ENCODE measurements at regions of chr14 and their contacts with region 1.

Region 1: GRCh38 chr14:34220921-34221320 is 241.1 kb downstream of the SPTSSA start:
- DNase-seq: no peak
- H3K4me3 Mint-ChIP-seq: no peak overlapping the region
- H3K27ac Mint-ChIP-seq: peak overlapping the region; percentile 6
- H3K4me1 Mint-ChIP-seq: peaks cover 46% of the 10 kb centered on the region
- H3K27me3 Mint-ChIP-seq: no peaks in the 10 kb centered on the region
- CTCF ChIP-seq: no peak

Region 2: DNA sequence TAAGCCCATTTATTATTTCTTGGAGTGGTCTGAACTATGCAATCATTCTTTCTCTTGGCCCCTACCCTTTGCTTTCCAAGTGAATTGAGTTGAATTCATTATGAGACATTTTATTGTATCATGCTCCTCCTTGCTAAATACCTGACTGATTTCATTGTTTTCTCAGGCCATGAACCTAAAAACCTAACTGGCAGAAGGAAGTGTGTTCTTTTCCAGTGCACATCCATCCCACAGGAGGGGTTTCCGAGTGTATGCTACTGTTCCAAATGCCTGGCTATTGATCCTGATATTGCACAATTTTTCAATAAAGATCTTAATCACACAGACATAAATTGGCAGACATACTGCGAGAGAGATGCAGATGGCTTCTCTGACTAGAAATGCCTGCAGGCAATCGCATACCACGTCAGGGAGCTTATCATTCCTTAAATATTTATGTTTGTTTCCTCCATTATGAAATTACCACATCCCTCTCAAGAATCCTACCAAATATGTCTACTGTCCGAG is 107.9 kb before region 1 on chr14:
- CTCF ChIA-PET with region 1: no interaction called
- intact Hi-C with region 1: loop called (anchors 2 kb)
- DNase-seq: peak; percentile 37
- H3K4me3 Mint-ChIP-seq: no peak overlapping the region
- H3K27ac Mint-ChIP-seq: peak overlapping the region; percentile 79
- H3K4me1 Mint-ChIP-seq: peaks cover 38% of the 10 kb centered on the region
- H3K27me3 Mint-ChIP-seq: no peaks in the 10 kb centered on the region
- CTCF ChIP-seq: no peak

Region 3: DNA sequence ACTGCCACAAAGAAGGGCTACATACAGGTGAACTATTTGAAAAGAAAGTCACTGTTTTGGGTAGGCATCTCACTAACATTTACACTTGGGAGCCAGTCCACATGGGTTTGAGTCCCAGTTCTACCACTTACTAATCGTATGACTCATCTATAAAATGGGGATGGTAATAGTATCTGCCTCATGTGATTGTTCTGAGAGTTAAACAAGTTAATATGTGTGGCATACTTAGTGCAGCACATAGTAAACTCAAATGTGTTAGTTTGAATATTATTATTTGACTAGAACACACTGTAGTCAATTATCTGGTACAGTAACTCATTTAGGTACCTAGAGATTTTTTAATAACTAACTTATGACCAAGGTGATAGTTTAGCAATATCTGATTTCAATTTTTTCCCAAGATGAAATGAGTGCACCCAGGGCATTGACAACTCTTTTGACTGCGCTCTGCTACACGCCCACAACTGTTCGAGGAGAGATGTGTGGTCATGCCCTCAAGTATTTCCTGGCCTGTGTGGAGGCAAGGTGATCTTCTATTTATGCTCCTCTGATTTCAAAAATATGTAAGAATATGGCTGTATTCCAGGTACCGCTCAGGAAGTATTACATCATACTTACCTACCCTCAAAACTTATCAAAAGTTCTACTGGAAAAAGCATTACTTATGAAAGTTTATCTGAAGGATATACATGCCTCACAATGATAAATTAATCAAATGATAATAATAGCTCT is 59.4 kb before region 1 on chr14:
- CTCF ChIA-PET with region 1: no interaction called
- intact Hi-C with region 1: no loop called
- DNase-seq: peak; percentile 37
- H3K4me3 Mint-ChIP-seq: no peak overlapping the region
- H3K27ac Mint-ChIP-seq: no peak overlapping the region
- H3K4me1 Mint-ChIP-seq: no peaks in the 10 kb centered on the region
- H3K27me3 Mint-ChIP-seq: no peaks in the 10 kb centered on the region
- CTCF ChIP-seq: no peak

Region 4: DNA sequence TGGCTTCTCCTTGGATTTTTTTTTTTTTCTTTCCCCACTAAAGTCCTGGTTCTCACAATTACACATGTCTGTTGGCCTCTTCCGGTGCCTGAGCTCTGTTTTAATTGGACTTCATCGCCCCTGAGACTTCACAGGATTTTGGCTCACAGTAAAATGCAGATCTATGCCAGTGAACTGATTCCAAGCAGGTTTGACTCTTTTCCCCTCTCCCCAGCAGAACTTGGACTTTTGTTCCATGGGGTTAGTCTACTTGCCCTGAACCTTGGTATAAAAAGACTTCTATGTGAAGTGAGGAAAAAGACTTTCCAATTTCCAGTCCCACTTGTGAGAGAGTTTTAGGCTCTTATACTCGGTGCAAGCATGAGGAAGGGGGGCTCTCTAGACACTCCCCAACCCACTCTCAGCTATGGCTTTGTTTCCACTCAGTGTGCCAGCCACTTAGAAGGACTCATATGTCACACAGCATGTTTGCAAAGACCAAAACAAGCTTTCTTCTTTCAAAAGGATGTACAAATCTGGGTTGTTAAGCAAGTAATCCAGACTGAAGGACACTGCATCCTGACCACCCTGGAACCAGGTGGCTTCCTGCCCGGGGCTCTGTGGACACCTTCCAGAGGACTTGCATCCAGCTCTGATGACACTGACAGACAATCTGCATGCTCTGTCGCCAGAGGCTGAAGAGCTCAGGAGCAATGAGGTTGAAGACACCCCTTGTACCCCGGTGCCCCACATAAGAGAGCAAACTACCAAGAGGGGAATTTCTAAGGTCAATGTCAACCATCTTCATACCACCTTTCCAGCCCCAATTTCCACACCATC is 48.2 kb before region 1 on chr14:
- CTCF ChIA-PET with region 1: no interaction called
- intact Hi-C with region 1: loop called (anchors 5 kb)
- DNase-seq: no peak
- H3K4me3 Mint-ChIP-seq: peak overlapping the region; percentile 36
- H3K27ac Mint-ChIP-seq: no peak overlapping the region
- H3K4me1 Mint-ChIP-seq: peaks cover 20% of the 10 kb centered on the region
- H3K27me3 Mint-ChIP-seq: peaks cover 8% of the 10 kb centered on the region
- CTCF ChIP-seq: no peak

Region 5: DNA sequence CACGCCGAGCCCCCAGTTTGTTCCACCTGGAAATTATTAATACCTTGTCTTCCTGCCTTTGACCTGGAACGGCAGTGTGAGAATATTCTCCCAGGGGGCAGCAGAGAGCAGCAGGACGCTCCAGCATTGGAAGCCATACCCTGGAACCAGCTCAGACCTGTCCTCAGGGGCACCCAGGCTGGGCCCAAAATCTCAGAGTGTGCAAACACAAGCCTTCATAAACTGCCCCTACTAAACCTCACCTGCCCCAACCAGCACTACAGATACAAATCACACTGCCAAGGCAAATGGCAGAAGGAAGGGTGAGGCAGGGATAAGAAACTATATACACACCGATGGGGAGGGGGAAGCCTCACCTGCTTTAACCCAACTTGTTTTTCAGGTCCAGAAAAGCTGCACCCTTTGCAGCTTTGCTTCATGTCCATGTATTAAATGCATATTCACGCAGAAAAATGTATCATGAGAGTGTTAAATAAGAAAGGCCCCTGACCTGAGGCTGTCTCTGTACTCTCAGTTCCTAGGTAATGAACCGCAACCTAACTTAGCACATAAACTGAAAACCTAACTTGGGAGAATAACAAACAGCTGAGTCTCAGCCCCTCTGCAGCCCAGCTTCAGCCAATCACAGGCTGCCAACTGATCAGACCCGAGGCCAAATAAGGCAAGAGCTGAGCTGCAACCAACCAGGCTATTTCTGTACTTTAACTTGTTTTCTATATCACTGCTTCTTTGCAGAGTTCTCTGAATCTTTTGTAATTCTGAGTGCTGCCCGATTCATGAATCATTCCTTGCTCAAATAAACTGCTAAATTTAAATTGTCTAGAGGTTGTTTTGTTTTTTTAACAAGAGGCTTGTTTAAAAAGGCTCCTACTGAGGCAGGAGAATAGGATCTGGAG is 111.1 kb after region 1 on chr14:
- CTCF ChIA-PET with region 1: no interaction called
- intact Hi-C with region 1: no loop called
- DNase-seq: peak; percentile 84
- H3K4me3 Mint-ChIP-seq: no peak overlapping the region
- H3K27ac Mint-ChIP-seq: peak overlapping the region; percentile 72
- H3K4me1 Mint-ChIP-seq: peaks cover 16% of the 10 kb centered on the region
- H3K27me3 Mint-ChIP-seq: no peaks in the 10 kb centered on the region
- CTCF ChIP-seq: peak; percentile 65